ENCODE measurements at regions of chr9 and their contacts with region 1.

Region 1: DNA sequence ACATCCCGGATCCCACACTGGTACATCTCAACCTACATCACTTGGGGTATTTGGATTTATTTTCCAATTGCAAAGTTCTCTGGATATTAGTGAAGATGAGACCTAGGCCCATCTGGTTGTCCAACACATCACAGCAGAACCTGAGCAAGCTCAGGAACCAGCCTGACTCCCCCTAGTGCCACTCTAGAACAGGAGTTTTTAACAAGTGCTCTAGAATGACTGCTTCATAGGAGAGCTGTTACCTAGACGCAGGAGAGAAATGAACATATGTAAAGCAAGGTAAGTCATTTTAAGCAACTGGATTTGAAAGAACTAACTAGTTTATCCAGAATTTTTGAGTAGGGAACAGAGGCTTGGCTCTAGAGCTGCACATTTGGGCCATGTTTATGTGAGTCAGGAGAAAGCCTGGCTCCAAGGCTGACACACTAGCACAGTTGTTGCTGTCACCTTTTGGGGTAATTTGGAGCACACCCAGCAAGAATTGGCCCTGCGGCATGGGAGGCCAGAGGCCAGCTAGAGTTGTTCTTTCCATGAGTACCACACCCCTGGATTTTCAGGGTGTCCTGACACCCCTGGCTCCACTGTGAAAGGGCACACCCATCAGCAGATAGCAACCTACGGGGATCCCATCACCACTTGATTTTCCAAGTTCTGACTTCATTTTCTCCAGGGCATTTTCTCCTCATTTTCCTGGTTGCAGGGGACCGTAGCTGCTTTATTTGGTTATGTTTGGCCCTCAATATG is 110.9 kb upstream of the LPAR1 start:
- DNase-seq: no peak
- ATAC-seq: peak; percentile 82
- H3K4me3 ChIP-seq: no peak overlapping the region
- H3K27ac ChIP-seq: no peak overlapping the region
- H3K4me1 ChIP-seq: no peaks in the 10 kb centered on the region; the same call in 1 of the 2 replicates
- H3K27me3 ChIP-seq: no peaks in the 10 kb centered on the region
- CTCF ChIP-seq: peak in 2 of 3 experiments; percentile 23 to 40; a peak in 3 of 6 replicates
- EP300 ChIP-seq: no peak
- POLR2A ChIP-seq: no peak
- RAD21 ChIP-seq: peak; percentile 49; the same call in 1 of the 2 replicates

Region 2: DNA sequence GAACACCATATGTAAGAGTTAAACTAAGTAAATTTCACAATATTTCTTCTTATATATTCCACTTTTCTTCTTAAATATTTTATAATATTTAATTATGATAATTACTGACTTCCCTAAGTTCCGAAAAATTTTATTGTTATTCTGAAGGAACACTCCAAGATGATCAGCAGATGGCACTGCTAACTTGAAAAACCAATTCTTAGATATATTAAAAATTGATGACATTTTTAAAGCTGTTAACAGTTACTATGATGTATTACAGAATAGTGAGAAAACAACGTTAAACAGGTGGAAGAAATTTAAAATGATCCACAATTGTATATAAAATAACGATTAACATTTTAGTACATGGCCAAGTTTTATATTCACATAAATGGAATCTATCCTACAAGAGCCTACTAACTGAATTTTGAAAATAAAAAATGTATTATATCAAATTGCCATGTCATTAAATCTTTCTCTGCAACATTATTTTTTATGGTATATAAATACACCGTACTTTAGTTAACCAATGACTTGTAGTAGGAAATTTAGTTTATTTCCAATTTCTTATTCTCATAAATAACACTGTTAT is 510.7 kb before region 1 on chr9:
- CTCF ChIA-PET with region 1: interaction called, 5 read pairs
- POLR2A ChIA-PET with region 1: no interaction called
- RAD21 ChIA-PET with region 1: interaction called, 4 read pairs
- SMC1A ChIA-PET with region 1: interaction called, 6 read pairs
- in situ Hi-C with region 1: no loop called
- intact Hi-C with region 1: loop called (anchors 10 kb)
- DNase-seq: no peak
- ATAC-seq: peak; percentile 43; the same call in 1 of the 3 replicates
- H3K4me3 ChIP-seq: no peak overlapping the region
- H3K27ac ChIP-seq: no peak overlapping the region
- H3K4me1 ChIP-seq: no peaks in the 10 kb centered on the region
- H3K27me3 ChIP-seq: no peaks in the 10 kb centered on the region
- CTCF ChIP-seq: peak in 2 of 3 experiments; percentile 11 to 21; a peak in 3 of 6 replicates
- EP300 ChIP-seq: no peak
- POLR2A ChIP-seq: no peak
- RAD21 ChIP-seq: peak; percentile 81

Region 3: DNA sequence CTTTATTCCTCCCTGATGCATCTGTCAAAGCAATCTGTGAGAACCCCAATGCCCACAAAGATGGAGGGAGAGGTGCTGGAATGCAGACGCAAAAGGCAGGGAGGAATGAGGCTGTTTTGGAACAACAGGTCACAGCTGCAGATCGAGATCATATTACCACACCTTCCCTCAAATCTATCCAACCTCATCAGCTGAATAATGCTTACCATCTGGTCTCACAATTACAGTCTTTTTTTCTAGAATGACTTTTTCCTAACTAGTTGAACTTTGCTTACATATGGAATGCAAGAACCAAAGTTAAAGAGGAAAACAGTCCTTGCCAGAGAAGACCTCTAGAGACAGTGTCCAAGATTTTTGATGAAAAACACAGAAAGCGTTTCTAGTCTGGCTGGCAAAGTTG is 269.0 kb before region 1 on chr9:
- CTCF ChIA-PET with region 1: no interaction called
- POLR2A ChIA-PET with region 1: no interaction called
- RAD21 ChIA-PET with region 1: no interaction called
- SMC1A ChIA-PET with region 1: no interaction called
- in situ Hi-C with region 1: no loop called
- intact Hi-C with region 1: loop called (anchors 10 kb)
- DNase-seq: no peak
- ATAC-seq: no peak
- H3K4me3 ChIP-seq: no peak overlapping the region
- H3K27ac ChIP-seq: no peak overlapping the region
- H3K4me1 ChIP-seq: peaks cover 2% of the 10 kb centered on the region; the same call in 1 of the 2 replicates
- H3K27me3 ChIP-seq: no peaks in the 10 kb centered on the region
- CTCF ChIP-seq: no peak
- EP300 ChIP-seq: no peak
- POLR2A ChIP-seq: no peak
- RAD21 ChIP-seq: no peak

Region 4: DNA sequence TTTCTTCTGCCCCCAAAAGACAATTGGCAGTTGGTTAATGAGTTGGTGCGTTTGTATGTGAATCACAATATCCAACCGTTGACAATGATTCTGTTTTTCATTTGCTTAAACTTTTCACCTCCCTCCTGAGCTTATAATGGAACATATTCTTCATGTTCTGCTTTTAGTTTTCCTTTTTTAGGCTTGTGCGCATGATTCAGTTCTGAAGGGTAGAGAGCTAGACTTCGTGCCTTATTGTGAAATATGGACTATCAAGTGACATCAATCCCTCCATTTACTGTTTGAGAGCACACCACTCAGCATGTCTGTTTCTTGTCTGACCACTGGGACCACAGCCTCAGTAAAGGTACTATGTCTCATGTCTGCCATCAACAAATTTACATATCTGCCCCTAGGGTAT is 80.4 kb before region 1 on chr9:
- CTCF ChIA-PET with region 1: interaction called, 9 read pairs
- POLR2A ChIA-PET with region 1: interaction called, 3 read pairs
- RAD21 ChIA-PET with region 1: interaction called, 12 read pairs
- SMC1A ChIA-PET with region 1: interaction called, 37 read pairs
- in situ Hi-C with region 1: no loop called
- intact Hi-C with region 1: no loop called
- DNase-seq: no peak
- ATAC-seq: no peak
- H3K4me3 ChIP-seq: no peak overlapping the region
- H3K27ac ChIP-seq: no peak overlapping the region
- H3K4me1 ChIP-seq: peaks cover 6% of the 10 kb centered on the region
- H3K27me3 ChIP-seq: no peaks in the 10 kb centered on the region
- CTCF ChIP-seq: no peak
- EP300 ChIP-seq: no peak
- POLR2A ChIP-seq: no peak
- RAD21 ChIP-seq: no peak

Region 5: GRCh38 chr9:111078391-111079038 is 70.7 kb before region 1 on chr9:
- CTCF ChIA-PET with region 1: interaction called, 8 read pairs
- POLR2A ChIA-PET with region 1: interaction called, 3 read pairs
- RAD21 ChIA-PET with region 1: interaction called, 11 read pairs
- SMC1A ChIA-PET with region 1: interaction called, 9 read pairs
- in situ Hi-C with region 1: no loop called
- intact Hi-C with region 1: loop called (anchors 5 kb)
- DNase-seq: peak; percentile 60
- ATAC-seq: peak; percentile 83
- H3K4me3 ChIP-seq: no peak overlapping the region
- H3K27ac ChIP-seq: peak overlapping the region; percentile 50
- H3K4me1 ChIP-seq: no peaks in the 10 kb centered on the region
- H3K27me3 ChIP-seq: no peaks in the 10 kb centered on the region
- CTCF ChIP-seq: no peak
- EP300 ChIP-seq: peak; percentile 25 to 43; a peak in 2 of 4 replicates
- POLR2A ChIP-seq: no peak
- RAD21 ChIP-seq: no peak

Region 6: DNA sequence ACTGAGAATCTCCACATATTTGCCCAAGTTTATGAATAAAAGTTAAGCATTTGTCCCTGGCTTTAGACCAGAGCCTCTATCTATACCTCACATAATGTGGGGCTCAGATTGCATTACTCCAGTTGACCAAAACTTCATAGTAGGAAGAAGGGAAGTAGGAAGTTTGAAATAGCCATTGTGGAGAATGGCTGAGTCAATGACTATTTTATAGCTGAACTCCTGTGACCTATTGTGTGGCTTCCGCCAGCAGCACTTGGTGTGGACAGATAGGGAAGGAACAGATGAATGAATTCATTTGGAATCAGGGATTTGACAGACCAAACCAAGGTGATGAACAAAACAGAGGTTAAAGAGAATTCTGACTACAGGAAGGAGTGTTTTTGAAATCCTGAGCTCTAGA is 18.0 kb before region 1 on chr9:
- CTCF ChIA-PET with region 1: interaction called, 7 read pairs
- POLR2A ChIA-PET with region 1: no interaction called
- RAD21 ChIA-PET with region 1: interaction called, 3 read pairs
- SMC1A ChIA-PET with region 1: interaction called, 16 read pairs
- in situ Hi-C with region 1: no loop called
- intact Hi-C with region 1: no loop called
- DNase-seq: no peak
- ATAC-seq: no peak
- H3K4me3 ChIP-seq: no peak overlapping the region
- H3K27ac ChIP-seq: no peak overlapping the region
- H3K4me1 ChIP-seq: no peaks in the 10 kb centered on the region
- H3K27me3 ChIP-seq: no peaks in the 10 kb centered on the region
- CTCF ChIP-seq: no peak
- EP300 ChIP-seq: no peak
- POLR2A ChIP-seq: no peak
- RAD21 ChIP-seq: no peak

Region 7: GRCh38 chr9:111161015-111161415 is 11.8 kb after region 1 on chr9:
- CTCF ChIA-PET with region 1: interaction called, 11 read pairs
- POLR2A ChIA-PET with region 1: interaction called, 3 read pairs
- RAD21 ChIA-PET with region 1: interaction called, 8 read pairs
- SMC1A ChIA-PET with region 1: interaction called, 31 read pairs
- in situ Hi-C with region 1: no loop called
- intact Hi-C with region 1: no loop called
- DNase-seq: no peak
- ATAC-seq: peak; percentile 67
- H3K4me3 ChIP-seq: no peak overlapping the region
- H3K27ac ChIP-seq: no peak overlapping the region
- H3K4me1 ChIP-seq: no peaks in the 10 kb centered on the region
- H3K27me3 ChIP-seq: no peaks in the 10 kb centered on the region
- CTCF ChIP-seq: no peak
- EP300 ChIP-seq: no peak
- POLR2A ChIP-seq: no peak
- RAD21 ChIP-seq: no peak

Region 8: DNA sequence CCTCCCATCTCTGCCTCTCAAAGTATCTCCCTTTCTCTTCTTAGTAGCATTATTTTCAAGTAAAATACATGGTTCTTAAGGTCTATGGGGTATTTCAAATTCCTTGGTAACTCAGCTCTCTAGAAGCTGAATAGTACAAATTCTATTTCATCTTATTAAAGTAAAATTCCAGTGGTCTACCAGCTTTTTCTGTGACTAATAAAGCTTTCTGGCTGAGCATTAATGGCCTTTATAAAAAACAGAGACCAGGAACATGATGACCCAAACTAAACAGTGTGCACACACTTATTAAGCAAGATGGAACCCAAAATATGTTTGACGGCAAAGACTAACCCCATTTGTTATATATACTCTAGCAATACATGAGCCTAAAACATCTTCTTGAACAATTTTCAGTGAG is 38.2 kb after region 1 on chr9:
- CTCF ChIA-PET with region 1: no interaction called
- POLR2A ChIA-PET with region 1: no interaction called
- RAD21 ChIA-PET with region 1: no interaction called
- SMC1A ChIA-PET with region 1: no interaction called
- in situ Hi-C with region 1: no loop called
- intact Hi-C with region 1: no loop called
- DNase-seq: no peak
- ATAC-seq: no peak
- H3K4me3 ChIP-seq: no peak overlapping the region
- H3K27ac ChIP-seq: no peak overlapping the region
- H3K4me1 ChIP-seq: no peaks in the 10 kb centered on the region
- H3K27me3 ChIP-seq: no peaks in the 10 kb centered on the region
- CTCF ChIP-seq: no peak
- EP300 ChIP-seq: no peak
- POLR2A ChIP-seq: no peak
- RAD21 ChIP-seq: no peak

Region 9: DNA sequence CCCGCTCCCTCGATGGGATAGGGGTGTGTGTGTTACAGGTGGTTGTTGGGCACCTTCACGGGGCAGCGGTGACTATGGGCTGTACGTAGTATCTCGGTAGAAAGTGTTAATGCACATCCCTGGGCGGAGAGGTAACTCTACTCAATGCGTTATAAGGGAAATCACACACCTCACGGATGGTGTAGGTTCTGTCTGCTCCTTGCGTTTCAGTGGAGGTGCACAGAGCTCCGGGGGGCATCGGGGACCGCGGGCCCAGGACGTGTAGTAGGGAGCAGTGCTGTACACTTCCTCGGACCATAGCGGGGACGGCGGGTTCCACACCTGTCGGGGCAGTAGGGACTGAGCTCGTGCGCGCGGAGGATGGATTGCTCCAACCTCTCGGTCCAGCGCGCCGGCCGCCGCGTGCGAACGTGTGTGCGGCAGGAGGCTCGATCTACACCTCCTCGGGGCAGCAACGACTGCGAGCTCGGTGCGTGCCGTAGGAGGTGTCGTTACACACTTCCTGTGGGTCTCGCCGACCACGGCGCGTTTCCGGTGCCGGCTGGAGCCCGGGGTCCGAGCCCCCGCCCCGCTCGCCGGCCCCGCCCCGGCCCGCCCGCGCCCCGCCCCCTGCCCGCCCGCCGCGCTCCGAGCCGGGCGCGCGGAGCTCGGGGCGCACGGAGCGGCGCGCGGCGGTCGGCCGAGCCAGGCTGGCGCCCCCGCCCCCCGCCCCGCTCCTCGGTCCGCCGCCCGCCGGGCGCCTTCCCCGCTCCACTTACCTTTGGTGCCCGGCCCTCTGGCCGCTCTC is 1337.2 kb after region 1 on chr9 and contains the start of gene KIAA1958:
- CTCF ChIA-PET with region 1: no interaction called
- POLR2A ChIA-PET with region 1: no interaction called
- RAD21 ChIA-PET with region 1: no interaction called
- SMC1A ChIA-PET with region 1: no interaction called
- in situ Hi-C with region 1: no loop called
- intact Hi-C with region 1: no loop called
- DNase-seq: peak; percentile 40
- ATAC-seq: peak; percentile 92
- H3K4me3 ChIP-seq: peak within 1 kb of the TSS; percentile 70
- H3K27ac ChIP-seq: peak within 1 kb of the TSS; percentile 54
- H3K4me1 ChIP-seq: no peaks in the 10 kb centered on the region
- H3K27me3 ChIP-seq: no peaks in the 10 kb centered on the region
- CTCF ChIP-seq: no peak
- EP300 ChIP-seq: no peak
- POLR2A ChIP-seq: peak; percentile 100
- RAD21 ChIP-seq: no peak
- polyA plus RNA-seq, gene KIAA1958: 0.53 to 0.80 TPM